ENCODE measurements at regions of chr6 and their contacts with region 1.

Region 1: DNA sequence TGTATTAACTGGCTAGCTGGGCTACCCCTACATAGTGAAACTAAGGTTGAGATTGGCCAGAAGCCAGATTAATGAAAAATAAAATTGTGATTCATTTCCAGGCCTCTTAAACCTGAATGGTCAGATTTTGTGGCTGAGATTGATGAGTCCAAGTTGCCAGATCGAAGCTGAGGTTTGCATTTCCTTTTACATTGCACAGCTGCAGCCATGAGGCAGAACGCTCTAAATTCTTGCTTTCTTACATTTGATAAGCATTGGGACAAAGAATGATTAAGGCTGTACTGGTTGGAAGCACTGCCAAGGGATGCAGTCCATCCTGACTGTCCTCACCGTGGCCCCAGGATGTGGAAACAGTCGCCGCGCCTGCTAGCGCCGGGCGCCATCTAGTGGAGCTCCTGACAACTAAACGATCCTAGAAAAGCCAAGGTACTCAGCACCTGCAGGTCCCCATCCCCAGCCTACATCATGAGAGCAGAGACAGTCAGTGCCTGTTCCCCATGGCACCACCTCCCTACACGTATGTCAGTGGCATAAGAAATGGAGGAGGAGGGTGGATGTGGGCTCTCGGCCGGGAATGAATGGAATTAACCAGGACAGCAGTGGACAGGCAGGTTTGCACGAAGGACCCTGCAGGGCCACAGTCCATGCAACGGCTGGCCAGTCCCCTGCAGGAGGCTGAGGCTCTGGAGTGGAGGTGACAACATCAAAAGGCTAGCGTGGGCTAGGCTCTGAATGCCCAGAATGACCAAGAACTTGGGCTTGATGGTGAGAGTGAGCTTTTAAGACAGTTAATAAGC is 19.0 kb downstream of the PXDC1 start:
- DNase-seq: peak; percentile 77 to 87 (median 87)
- ATAC-seq: peak; percentile 78 to 82
- H3K4me3 ChIP-seq: no peak overlapping the region
- H3K27ac ChIP-seq: no peak overlapping the region
- H3K4me1 ChIP-seq: no peaks in the 10 kb centered on the region
- H3K27me3 ChIP-seq: no peaks in the 10 kb centered on the region

Region 2: DNA sequence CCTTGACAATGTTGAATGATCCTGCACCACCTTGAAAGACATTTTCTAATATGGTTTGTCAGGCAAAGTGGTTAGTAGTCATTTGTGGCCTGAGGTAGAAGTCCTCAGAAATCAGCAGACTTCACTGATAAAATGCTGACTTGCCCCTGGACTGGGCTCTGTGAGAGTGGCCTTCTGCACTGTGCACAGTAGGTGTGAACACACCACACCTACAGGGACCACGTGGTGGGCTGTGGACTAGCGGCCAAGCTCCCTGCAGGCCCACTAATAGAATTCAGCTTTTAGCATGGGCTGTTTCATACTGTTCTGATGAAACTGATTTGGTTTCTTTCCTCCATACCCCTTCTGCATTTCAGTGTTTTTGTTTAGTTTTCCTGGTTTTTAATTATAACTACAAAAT is 606.7 kb before region 1 on chr6:
- intact Hi-C with region 1: loop called in 2 of 4 experiments (anchors 10 kb)
- DNase-seq: no peak
- ATAC-seq: no peak
- H3K4me3 ChIP-seq: no peak overlapping the region
- H3K27ac ChIP-seq: no peak overlapping the region
- H3K4me1 ChIP-seq: no peaks in the 10 kb centered on the region
- H3K27me3 ChIP-seq: no peaks in the 10 kb centered on the region

Region 3: GRCh38 chr6:3139090-3139903 is 593.2 kb before region 1 on chr6:
- intact Hi-C with region 1: loop called in 1 of 4 experiments (anchors 10 kb)
- DNase-seq: peak; percentile 50 to 81 (median 75)
- ATAC-seq: peak; percentile 81 to 90
- H3K4me3 ChIP-seq: no peak overlapping the region
- H3K27ac ChIP-seq: peak overlapping the region; percentile 51
- H3K4me1 ChIP-seq: no peaks in the 10 kb centered on the region
- H3K27me3 ChIP-seq: no peaks in the 10 kb centered on the region

Region 4: GRCh38 chr6:3281631-3282475 is 450.7 kb before region 1 on chr6:
- intact Hi-C with region 1: loop called (anchors 2 to 5 kb)
- DNase-seq: peak in 2 of 3 donors; percentile 46 to 60
- ATAC-seq: peak; percentile 24 to 67
- H3K4me3 ChIP-seq: no peak overlapping the region
- H3K27ac ChIP-seq: peak overlapping the region; percentile 22
- H3K4me1 ChIP-seq: no peaks in the 10 kb centered on the region
- H3K27me3 ChIP-seq: no peaks in the 10 kb centered on the region

Region 5: DNA sequence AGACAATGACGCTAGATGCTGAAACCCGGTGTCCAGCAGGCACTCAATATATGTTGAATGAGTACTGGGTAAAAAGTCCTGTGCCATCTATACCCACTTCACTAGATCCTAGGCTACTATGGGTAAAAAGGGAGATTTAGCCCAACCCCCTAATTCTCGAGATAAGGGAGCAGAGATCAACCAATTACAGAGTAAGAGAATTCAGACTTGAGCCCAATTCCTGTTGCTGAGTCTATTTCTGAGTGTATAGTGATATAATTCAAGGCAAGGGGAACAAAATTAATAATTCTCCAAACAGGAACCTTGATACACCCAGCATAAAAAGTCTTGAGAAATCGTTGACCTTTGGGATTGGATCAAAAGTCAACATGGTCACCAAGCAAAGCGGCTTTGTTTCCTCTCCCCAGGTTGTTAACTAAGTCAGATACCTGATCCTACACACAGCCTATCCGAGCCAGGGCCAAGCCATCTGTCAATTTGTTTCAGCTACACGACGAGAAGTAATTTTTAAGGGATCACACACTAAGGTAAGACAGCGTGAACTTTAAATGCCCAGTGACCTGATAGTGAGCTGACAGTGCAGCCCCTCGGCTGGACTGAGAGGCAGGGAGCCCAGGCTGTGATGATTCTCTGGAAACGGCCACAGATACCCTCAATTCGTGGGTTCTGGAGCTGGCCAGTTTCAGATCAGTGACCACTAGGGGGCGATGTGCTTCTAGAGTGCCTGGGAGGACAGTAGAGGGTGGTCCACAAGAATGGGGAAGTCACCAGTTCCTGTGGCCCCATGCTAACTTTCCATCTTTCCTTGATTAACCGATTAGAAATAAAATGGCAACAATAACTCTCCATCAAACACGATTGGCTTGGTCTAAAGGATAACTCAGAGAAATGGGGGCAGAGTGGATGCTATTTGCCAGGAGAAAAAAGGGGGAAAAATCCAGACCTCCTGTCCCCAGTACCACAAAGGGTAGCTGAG is 321.9 kb before region 1 on chr6:
- intact Hi-C with region 1: loop called in 1 of 4 experiments (anchors 10 kb)
- DNase-seq: peak in 2 of 3 donors; percentile 42 to 61
- ATAC-seq: peak; percentile 50 to 67
- H3K4me3 ChIP-seq: no peak overlapping the region
- H3K27ac ChIP-seq: no peak overlapping the region
- H3K4me1 ChIP-seq: no peaks in the 10 kb centered on the region
- H3K27me3 ChIP-seq: no peaks in the 10 kb centered on the region

Measured in right cardiac atrium (tissue), 5 donors.